Transverse colon (tissue), 4 donors: ENCODE measurements at regions of chr10 and their contacts with region 1.

Region 1: DNA sequence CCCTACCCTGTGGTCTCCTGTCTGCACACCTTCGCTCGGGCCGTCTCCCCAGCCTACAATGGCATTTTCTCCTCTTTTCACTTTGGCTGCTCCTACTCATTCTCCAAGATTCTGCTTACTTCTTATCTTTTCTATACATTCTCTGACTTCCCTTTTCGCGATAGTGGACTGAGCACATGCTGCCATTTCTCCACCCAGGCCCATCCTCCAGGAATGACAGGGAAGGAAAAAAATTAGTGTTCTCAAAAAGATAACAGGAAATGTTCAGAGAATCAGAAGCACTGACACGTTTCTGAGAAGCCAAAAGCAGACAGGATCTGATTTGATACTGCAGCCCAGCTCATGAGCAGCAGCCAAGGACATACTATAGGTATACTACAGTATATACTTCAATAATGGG is 6.4 kb upstream of the ANXA11 start:
- DNase-seq: no peak
- H3K4me3 ChIP-seq: no peak overlapping the region
- H3K27ac ChIP-seq: no peak overlapping the region
- H3K4me1 ChIP-seq: peaks cover 3 to 19% (median 9%) of the 10 kb centered on the region in 4 donors
- H3K27me3 ChIP-seq: no peaks in the 10 kb centered on the region
- CTCF ChIP-seq: no peak
- EP300 ChIP-seq: no peak
- POLR2A ChIP-seq: no peak

Region 2: DNA sequence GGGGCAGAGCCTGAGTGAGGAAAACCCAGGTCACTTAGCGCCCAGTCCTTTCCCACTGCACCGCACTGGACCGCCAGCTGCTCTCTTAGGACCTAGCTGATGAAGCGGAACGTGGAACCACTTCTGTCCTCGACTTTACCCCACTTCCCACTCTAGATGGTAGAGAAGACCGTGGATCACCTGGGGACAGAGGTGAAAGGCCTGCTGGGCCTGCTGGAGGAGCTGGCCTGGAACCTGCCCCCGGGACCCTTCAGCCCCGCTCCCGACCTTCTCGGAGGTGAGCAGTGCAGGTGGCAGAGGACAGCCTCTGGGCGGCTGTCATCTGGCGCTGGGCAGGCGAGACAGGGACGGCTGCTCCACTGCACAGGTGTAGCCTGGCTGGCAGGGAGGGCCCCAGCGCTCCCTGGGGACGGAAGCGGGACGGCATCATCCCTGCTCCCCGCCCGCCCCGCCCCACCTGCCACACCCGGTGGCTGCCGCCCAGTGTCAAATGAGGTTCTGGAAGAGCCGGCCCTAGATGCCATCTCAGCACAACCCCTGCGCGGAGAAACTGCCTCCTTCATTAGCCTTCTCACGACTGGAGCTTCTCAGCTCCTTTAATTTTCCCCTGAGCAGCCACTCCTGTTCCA is 67.6 kb before region 1 on chr10:
- in situ Hi-C with region 1: loop called in 1 of 4 experiments (anchors 5 kb)
- intact Hi-C with region 1: no loop called
- DNase-seq: peak; percentile 73
- H3K4me3 ChIP-seq: peak overlapping the region in 1 of 4 donors; percentile 8
- H3K27ac ChIP-seq: peak overlapping the region; percentile 24 to 59 (median 54)
- H3K4me1 ChIP-seq: peaks cover 12 to 19% (median 14%) of the 10 kb centered on the region in 4 donors
- H3K27me3 ChIP-seq: peaks cover 16% of the 10 kb centered on the region
- CTCF ChIP-seq: peak in 4 of 5 experiments; percentile 6 to 68 (median 24)
- EP300 ChIP-seq: no peak
- POLR2A ChIP-seq: no peak

Region 3: GRCh38 chr10:80158598-80159127 is 53.1 kb before region 1 on chr10:
- in situ Hi-C with region 1: loop called in 3 of 4 experiments (anchors 5 to 10 kb)
- intact Hi-C with region 1: loop called (anchors 5 kb)
- DNase-seq: peak; percentile 67
- H3K4me3 ChIP-seq: no peak overlapping the region
- H3K27ac ChIP-seq: peak overlapping the region; percentile 74 to 84 (median 77)
- H3K4me1 ChIP-seq: peaks cover 13 to 32% (median 17%) of the 10 kb centered on the region in 4 donors
- H3K27me3 ChIP-seq: no peaks in the 10 kb centered on the region
- CTCF ChIP-seq: no peak
- EP300 ChIP-seq: no peak
- POLR2A ChIP-seq: no peak